ENCODE measurements at regions of chr1 and their contacts with region 1.

Region 1: GRCh38 chr1:205379056-205379455 is 22.3 kb upstream of the KLHDC8A start:
- DNase-seq: no peak
- H3K4me3 ChIP-seq: no peak overlapping the region
- H3K4me3 Mint-ChIP-seq: no peak overlapping the region
- H3K27ac ChIP-seq: no peak overlapping the region
- H3K27ac Mint-ChIP-seq: no peak overlapping the region
- H3K4me1 ChIP-seq: no peaks in the 10 kb centered on the region
- H3K4me1 Mint-ChIP-seq: peaks cover 2% of the 10 kb centered on the region
- H3K27me3 ChIP-seq: peaks cover 14 to 27% of the 10 kb centered on the region in 2 donors
- H3K27me3 Mint-ChIP-seq: peaks cover 24 to 45% (median 25%) of the 10 kb centered on the region in 3 donors
- CTCF ChIP-seq: no peak

Region 2: GRCh38 chr1:205359771-205360565 is 19.1 kb before region 1 on chr1:
- intact Hi-C with region 1: loop called in 1 of 2 experiments (anchors 2 kb)
- DNase-seq: no peak
- H3K4me3 ChIP-seq: no peak overlapping the region
- H3K4me3 Mint-ChIP-seq: no peak overlapping the region
- H3K27ac ChIP-seq: no peak overlapping the region
- H3K27ac Mint-ChIP-seq: no peak overlapping the region
- H3K4me1 ChIP-seq: no peaks in the 10 kb centered on the region
- H3K4me1 Mint-ChIP-seq: peaks cover 2% of the 10 kb centered on the region
- H3K27me3 ChIP-seq: peaks cover 2 to 11% of the 10 kb centered on the region in 2 donors
- H3K27me3 Mint-ChIP-seq: peaks cover 7 to 40% (median 24%) of the 10 kb centered on the region in 3 donors
- CTCF ChIP-seq: no peak

Measured in CD14-positive monocyte (primary cell).